Activated CD4-positive, alpha-beta T cell treated with anti-CD3 and anti-CD28 coated beads for 36 hours (primary cell): ENCODE measurements at regions of chr3 and their contacts with region 1.

Region 1: DNA sequence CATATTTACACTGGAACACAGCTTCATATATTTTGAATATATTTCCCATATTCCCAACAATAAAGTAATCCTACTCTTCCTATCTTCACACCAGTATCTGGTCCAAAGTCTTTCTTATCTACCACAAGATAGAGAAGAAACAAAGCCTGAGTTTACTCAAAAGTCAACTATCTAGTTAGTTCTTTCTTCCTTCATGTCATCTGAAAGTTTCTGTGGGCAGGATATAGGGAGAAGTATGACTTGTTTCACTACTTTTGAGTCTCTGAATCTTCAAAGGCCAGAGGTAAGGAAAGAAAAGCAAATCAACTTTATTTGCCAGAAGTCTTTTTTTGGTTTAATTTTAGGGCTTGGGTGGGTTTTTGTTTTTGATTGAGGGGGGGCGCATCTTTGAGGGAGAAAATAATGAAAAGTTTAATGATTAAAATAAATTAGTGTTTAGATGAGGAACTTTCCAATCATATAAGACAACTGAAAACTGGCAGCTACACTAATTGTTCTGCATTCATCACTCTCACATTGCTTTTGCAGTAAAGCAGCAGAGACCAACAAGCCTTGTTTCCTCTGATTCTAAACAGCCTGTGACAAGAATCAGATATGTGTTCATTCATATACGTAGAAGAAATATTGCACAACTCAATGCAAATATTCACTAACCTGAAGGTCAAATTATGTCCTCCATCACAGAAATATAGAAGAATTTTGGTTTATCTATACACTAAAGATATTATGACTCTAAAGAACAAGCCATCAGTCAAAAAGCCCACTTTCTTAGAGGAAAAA is 421.4 kb downstream of the SHQ1 start:
- DNase-seq: no peak
- ATAC-seq: peak; percentile 85
- H3K4me3 Mint-ChIP-seq: peak overlapping the region; percentile 6
- H3K27ac Mint-ChIP-seq: peak overlapping the region; percentile 77
- H3K4me1 Mint-ChIP-seq: peaks cover 80% of the 10 kb centered on the region
- H3K27me3 Mint-ChIP-seq: no peaks in the 10 kb centered on the region

Region 2: DNA sequence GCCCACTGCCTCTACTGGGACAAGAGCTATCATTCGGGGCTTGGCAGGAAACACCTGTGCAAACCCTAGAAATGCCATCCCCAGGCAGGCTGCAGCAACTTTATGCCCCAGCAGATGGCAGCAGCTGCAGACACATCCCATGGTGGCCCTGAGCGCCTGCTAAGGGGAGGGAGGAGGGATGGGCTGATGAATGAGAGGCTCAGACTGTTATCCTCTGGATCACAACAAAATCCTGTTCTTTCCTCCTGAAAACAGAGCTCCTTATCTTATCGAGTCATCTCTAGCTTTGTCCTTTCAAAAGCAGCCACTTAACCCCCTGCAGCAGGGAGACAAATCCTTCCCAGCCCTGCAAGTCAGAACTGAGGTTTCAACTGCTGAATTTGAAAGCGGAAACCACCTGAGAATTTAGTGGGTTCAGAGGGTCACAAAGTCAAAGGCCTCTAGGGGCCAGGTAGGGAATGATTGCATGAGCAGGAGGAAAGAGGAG is 551.3 kb before region 1 on chr3:
- CTCF ChIA-PET with region 1: no interaction called
- POLR2A ChIA-PET with region 1: no interaction called
- intact Hi-C with region 1: loop called in 1 of 2 experiments (anchors 2 kb)
- DNase-seq: peak; percentile 90
- ATAC-seq: peak; percentile 90
- H3K4me3 Mint-ChIP-seq: no peak overlapping the region
- H3K27ac Mint-ChIP-seq: peak overlapping the region; percentile 89
- H3K4me1 Mint-ChIP-seq: peaks cover 35% of the 10 kb centered on the region
- H3K27me3 Mint-ChIP-seq: peaks cover 6% of the 10 kb centered on the region

Region 3: DNA sequence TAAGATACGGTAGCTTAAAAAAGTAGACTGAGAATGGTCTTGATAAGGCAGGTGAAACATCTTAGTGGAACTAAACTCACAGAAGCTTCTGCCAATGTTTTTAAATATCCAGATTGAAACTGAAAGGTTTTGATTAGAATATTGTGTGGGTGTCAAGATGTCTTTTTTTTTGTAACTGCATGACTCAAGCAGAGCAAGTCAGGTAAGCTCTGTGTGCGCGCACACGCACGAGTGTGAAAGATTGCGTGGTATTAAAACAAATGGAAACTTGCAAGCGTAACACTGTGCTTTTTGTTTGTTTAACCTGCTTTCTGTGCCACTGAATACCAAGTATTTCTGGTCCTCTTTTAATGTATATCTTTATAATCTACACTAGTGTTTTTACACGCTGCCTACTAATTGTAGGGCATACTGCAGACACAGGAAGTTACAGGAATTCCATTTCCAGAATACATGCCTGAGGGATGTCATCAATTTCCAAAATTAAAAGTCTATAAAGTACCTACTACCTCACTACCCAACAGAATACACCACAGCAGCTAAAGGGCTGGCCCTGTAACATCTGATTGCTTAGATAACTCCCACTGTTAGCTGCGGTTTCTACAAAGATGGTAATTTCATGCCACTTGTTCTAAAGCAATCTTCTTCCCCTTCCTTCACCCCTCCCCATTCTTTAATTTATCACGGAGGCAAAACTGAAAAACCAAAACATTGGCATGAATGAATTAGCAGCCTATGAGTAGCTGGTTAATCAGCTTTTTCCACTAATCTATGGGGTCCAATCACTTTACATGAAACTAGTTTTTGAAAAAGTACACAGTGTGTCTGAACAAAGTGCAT is 51.4 kb before region 1 on chr3:
- CTCF ChIA-PET with region 1: no interaction called
- POLR2A ChIA-PET with region 1: interaction called, 5 read pairs
- intact Hi-C with region 1: loop called in 1 of 2 experiments (anchors 2 kb)
- DNase-seq: peak; percentile 75
- ATAC-seq: peak; percentile 83
- H3K4me3 Mint-ChIP-seq: peak overlapping the region; percentile 36
- H3K27ac Mint-ChIP-seq: peak overlapping the region; percentile 88
- H3K4me1 Mint-ChIP-seq: peaks cover 68% of the 10 kb centered on the region
- H3K27me3 Mint-ChIP-seq: no peaks in the 10 kb centered on the region

Region 4: DNA sequence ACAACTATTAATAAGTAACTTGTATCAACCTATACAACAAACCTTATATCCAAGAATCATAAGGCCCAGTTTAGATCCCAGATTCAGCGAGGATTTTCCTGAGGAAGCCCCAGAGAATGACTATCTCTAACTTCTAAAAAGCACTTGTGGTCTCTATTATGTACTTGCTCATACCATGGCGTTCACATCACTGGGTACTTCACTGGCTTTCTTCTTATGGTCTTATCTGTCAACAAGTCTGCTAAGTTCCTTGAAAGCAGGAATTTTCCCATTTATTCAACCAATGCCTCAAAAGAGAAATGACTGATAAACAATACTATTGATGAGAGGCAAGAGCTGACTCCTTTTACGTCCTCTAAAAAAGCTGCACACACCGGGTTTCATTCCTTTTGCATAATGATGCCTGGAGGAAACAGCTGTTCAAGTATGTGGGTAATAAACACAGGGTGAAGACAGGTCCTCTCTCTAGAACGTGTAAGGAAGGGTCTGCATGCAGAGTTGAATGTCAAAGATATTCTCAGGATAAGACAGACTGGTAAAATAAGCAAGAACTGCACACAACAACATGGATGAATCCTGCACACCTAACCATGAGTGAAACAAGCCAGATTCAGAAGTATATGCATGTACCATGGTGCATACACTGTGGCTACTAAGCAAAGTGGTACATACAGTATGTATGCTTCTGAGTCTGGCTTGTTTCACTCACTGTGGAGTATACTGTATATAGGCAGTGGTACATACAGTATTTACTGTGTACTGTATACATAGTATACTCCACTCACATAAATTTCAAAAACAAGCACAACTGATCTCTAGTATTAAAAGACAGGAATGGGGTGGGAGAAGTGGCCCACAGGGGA is 12.7 kb after region 1 on chr3:
- CTCF ChIA-PET with region 1: interaction called, 3 read pairs
- POLR2A ChIA-PET with region 1: interaction called, 6 read pairs
- intact Hi-C with region 1: loop called (anchors 2 kb)
- DNase-seq: no peak
- ATAC-seq: no peak
- H3K4me3 Mint-ChIP-seq: no peak overlapping the region
- H3K27ac Mint-ChIP-seq: no peak overlapping the region
- H3K4me1 Mint-ChIP-seq: peaks cover 85% of the 10 kb centered on the region
- H3K27me3 Mint-ChIP-seq: no peaks in the 10 kb centered on the region

Region 5: GRCh38 chr3:72523429-72524151 is 96.8 kb after region 1 on chr3:
- CTCF ChIA-PET with region 1: interaction called, 3 read pairs
- POLR2A ChIA-PET with region 1: no interaction called
- intact Hi-C with region 1: loop called in 1 of 2 experiments (anchors 1 kb)
- DNase-seq: no peak
- ATAC-seq: no peak
- H3K4me3 Mint-ChIP-seq: no peak overlapping the region
- H3K27ac Mint-ChIP-seq: peak overlapping the region; percentile 55
- H3K4me1 Mint-ChIP-seq: peaks cover 45% of the 10 kb centered on the region
- H3K27me3 Mint-ChIP-seq: no peaks in the 10 kb centered on the region

Region 6: GRCh38 chr3:72977060-72977808 is 550.4 kb after region 1 on chr3:
- CTCF ChIA-PET with region 1: no interaction called
- POLR2A ChIA-PET with region 1: no interaction called
- intact Hi-C with region 1: loop called in 1 of 2 experiments (anchors 5 kb)
- DNase-seq: peak; percentile 52
- ATAC-seq: peak; percentile 84
- H3K4me3 Mint-ChIP-seq: no peak overlapping the region
- H3K27ac Mint-ChIP-seq: peak overlapping the region; percentile 84
- H3K4me1 Mint-ChIP-seq: peaks cover 19% of the 10 kb centered on the region
- H3K27me3 Mint-ChIP-seq: peaks cover 3% of the 10 kb centered on the region